Head of caudate nucleus (tissue), 42 donors: ENCODE measurements at regions of chr22 and their contacts with region 1.

Region 1: GRCh38 chr22:18012531-18012930 is 11.8 kb downstream of the MICAL3 start:
- DNase-seq: peak in 1 of 42 donors; percentile 13

Region 2: DNA sequence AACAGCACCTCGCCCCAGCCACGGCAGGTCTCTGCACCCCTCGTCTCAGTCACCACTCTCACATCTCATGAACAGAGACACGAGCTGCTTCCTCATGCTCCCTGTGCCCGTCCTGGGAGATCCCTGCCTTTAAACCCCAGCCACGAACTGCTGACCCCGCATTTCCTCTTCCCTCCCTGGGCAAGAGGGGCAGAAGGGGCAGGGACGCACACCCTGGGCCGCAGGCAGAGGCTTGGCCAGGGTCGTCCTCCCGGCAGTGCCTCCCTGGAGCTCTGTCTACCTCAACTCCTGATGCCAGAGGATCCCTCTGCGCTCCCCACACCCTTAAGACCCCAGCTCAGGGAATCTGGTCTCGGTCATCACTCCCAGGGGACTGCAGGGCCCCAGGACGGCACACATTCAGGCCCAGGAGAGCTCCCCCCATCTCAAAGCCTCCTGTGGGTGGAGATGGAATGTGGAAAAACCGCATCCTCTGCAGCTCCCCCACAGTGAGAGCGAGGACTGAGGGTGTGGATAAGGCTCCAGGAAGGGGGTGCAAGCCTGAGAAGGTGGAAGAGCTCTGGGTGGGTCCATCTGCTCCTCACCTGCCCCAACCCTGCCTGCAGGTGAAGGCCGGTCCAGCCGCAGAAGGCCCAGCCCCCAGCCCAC is 239.4 kb before region 1 on chr22:
- intact Hi-C with region 1: no loop called
- DNase-seq: peak in 4 of 42 donors; percentile 29 to 54 (median 44)

Region 3: DNA sequence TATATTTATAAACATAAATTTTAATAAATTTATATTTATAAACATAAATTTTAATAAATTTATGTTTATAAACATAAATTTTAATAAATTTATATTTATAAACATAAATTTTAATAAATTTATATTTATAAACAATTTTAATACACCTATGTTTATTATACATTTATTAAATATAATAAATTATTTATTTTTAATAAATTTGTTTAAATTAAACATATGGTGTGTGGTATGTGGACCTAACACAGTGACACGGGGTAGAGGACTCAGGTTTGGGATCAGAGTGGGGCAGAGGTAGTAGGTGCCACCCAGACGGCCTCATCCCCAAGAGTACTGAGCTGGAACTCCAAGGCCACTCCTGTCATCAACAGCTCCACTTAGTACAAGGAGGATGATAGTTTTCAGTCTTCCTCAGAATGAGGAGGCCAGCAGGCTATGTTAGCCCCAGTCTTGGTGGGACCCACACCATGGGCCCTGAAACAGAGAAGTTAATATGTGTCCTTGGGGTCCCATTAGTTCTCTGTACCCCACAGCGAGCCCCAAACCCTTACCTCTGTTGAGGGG is 191.6 kb before region 1 on chr22:
- intact Hi-C with region 1: no loop called
- DNase-seq: no peak

Region 4: DNA sequence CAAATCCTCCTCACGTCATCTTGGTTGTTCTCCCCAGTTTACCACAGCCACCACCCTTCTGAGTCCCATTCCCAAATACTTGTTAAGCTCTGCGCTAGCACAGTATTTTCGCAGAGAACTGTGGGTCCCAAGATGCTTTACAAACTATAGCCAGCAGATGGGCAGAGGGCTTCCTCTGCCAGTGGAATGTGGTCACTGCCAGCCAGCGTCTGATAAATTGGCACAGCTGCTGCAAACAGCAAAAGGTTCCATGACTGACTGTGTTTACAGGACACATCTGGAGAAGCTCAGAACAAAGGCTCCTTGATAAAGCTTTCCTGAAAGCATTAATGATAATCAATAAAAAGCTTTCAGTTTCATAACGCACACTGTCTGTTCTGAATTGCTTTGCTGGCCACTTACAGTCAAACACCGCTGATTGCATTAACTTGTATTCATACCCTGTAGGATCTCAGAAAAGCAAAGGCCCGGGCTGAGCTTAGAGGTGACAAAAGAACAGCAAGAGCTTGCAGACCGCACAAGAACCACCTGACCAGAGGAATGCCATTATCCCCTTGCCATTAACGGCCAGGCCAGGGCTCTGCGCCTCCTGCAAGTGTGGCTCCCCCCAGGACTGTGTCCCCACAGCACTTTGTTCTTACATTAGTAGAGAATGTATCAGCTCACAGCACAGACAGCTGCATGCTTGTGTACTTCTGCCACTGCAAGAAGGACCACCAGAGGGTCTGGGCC is 108.8 kb before region 1 on chr22:
- intact Hi-C with region 1: loop called (anchors 10 kb)
- DNase-seq: peak in 29 of 42 donors; percentile 30 to 83 (median 59)

Region 5: GRCh38 chr22:18133452-18133851 is 120.9 kb after region 1 on chr22:
- intact Hi-C with region 1: no loop called
- DNase-seq: no peak